CD8-positive, alpha-beta T cell (primary cell): ENCODE measurements at regions of chr22 and their contacts with region 1.

Region 1: GRCh38 chr22:26398741-26399153 is 30.3 kb upstream of the ASPHD2 start:
- DNase-seq: peak in 8 of 9 experiments; percentile 36 to 63 (median 50)
- ATAC-seq: peak; percentile 52
- H3K4me3 ChIP-seq: no peak overlapping the region
- H3K4me3 Mint-ChIP-seq: no peak overlapping the region
- H3K27ac ChIP-seq: no peak overlapping the region
- H3K27ac Mint-ChIP-seq: no peak overlapping the region
- H3K4me1 ChIP-seq: no peaks in the 10 kb centered on the region
- H3K4me1 Mint-ChIP-seq: no peaks in the 10 kb centered on the region
- H3K27me3 ChIP-seq: no peaks in the 10 kb centered on the region
- H3K27me3 Mint-ChIP-seq: peaks cover 4% of the 10 kb centered on the region
- CTCF ChIP-seq: peak; percentile 36

Region 2: DNA sequence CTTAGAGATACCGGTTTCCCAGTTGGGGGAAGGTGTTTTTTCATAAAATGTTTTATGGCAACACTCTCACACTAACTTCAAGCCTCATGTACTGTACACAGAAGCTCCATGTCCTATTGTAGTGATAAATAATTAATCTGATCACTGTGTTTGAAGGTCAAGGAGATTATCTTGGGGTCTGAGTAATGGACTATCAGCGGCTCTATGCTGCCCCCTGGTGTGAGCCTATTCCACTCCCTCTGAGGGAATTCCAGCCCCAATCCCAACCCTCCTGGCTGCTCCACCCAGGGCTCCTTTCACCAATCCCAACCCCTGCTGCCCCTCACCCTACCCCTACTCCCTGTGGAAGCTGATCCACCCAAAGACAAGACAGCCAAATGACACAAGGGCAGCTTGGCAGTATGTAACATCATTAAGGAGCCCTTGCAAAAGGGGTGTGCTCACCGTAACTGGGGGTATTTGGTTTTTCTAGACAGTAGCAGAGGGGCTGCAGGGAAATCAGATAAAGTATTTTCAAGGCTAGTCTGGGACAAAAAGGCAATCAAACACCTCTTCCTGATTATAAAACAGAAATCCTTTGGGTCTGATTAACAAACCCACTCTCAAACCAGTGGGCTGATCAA is 62.6 kb after region 1 on chr22:
- CTCF ChIA-PET with region 1: interaction called, 53 read pairs
- POLR2A ChIA-PET with region 1: no interaction called
- intact Hi-C with region 1: loop called (anchors 1 kb)
- DNase-seq: peak in 7 of 9 experiments; percentile 16 to 56 (median 50)
- ATAC-seq: no peak
- H3K4me3 ChIP-seq: no peak overlapping the region
- H3K4me3 Mint-ChIP-seq: no peak overlapping the region
- H3K27ac ChIP-seq: no peak overlapping the region
- H3K27ac Mint-ChIP-seq: no peak overlapping the region
- H3K4me1 ChIP-seq: no peaks in the 10 kb centered on the region
- H3K4me1 Mint-ChIP-seq: peaks cover 6% of the 10 kb centered on the region
- H3K27me3 ChIP-seq: no peaks in the 10 kb centered on the region
- H3K27me3 Mint-ChIP-seq: no peaks in the 10 kb centered on the region
- CTCF ChIP-seq: peak; percentile 75

Region 3: GRCh38 chr22:27804470-27805297 is 1405.9 kb after region 1 on chr22:
- CTCF ChIA-PET with region 1: no interaction called
- POLR2A ChIA-PET with region 1: no interaction called
- intact Hi-C with region 1: loop called in 1 of 2 experiments (anchors 10 kb)
- DNase-seq: peak; percentile 6 to 67 (median 49)
- ATAC-seq: no peak
- H3K4me3 ChIP-seq: no peak overlapping the region
- H3K4me3 Mint-ChIP-seq: no peak overlapping the region
- H3K27ac ChIP-seq: no peak overlapping the region
- H3K27ac Mint-ChIP-seq: no peak overlapping the region
- H3K4me1 ChIP-seq: peaks cover 12% of the 10 kb centered on the region
- H3K4me1 Mint-ChIP-seq: peaks cover 14% of the 10 kb centered on the region
- H3K27me3 ChIP-seq: peaks cover 9 to 12% of the 10 kb centered on the region in 2 experiments
- H3K27me3 Mint-ChIP-seq: peaks cover 18% of the 10 kb centered on the region
- CTCF ChIP-seq: peak; percentile 60